PC-3 (cell line): ENCODE measurements at regions of chr9 and their contacts with region 1.

Region 1: DNA sequence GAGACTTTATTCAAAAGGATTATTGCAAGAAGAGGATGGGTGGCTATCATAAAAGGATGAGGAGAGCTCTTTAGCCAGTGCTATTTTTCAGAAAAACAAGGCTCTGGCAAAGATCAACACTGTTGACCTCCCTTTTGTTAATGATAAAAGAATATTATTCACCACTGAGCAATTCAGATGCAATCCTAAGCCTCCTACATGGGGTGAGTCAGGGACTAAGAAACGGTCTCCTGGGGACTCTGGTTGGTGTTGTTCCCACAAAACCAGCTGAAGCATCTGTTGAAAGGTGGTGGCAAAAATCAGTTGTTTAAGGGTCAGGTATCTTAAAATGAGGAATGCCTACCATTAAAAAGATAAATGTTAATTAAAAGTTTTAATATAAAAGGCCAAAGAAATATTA is 7.7 kb upstream of the GCNT1 start:
- DNase-seq: peak; percentile 13
- ATAC-seq: no peak
- H3K4me3 ChIP-seq: no peak overlapping the region
- H3K27ac ChIP-seq: no peak overlapping the region
- H3K4me1 ChIP-seq: no peaks in the 10 kb centered on the region
- H3K27me3 ChIP-seq: no peaks in the 10 kb centered on the region
- CTCF ChIP-seq: no peak

Region 2: GRCh38 chr9:76490249-76490990 is 39.2 kb after region 1 on chr9:
- CTCF ChIA-PET with region 1: no interaction called
- POLR2A ChIA-PET with region 1: no interaction called
- intact Hi-C with region 1: no loop called
- DNase-seq: no peak
- ATAC-seq: no peak
- H3K4me3 ChIP-seq: no peak overlapping the region
- H3K27ac ChIP-seq: no peak overlapping the region
- H3K4me1 ChIP-seq: no peaks in the 10 kb centered on the region
- H3K27me3 ChIP-seq: no peaks in the 10 kb centered on the region
- CTCF ChIP-seq: no peak

Region 3: DNA sequence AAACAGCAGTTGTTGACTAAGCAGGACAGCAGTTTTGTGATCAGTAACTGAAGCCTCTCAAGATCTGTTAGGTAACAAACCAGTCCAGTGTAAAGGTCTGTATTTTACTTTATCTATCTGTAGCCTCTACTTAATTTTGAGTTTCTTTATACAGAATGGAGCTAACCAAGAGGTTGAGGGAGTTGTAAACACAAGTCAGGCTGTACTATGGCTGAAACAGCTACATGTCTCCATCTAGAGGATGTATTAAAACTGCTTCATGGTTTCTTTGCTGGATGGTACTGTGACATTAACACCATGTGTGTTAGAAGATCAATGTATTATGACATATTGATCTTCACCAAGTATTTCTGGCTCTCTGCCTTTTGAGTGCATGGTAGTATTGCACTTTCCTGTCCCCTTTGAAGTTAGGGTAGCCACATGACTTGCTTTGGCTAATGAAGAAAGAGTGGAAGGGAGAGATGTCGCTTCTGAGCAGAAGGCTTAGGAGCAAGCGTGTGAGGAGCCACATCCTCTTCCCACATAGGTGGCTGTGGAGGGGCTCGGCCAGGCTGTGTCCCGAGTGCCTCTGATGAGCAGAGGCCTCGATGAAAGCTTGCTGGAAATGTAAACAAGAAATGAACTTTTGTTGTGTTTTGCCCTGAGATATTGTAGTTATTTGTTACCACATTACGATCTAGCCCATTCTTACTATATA is 207.4 kb after region 1 on chr9:
- CTCF ChIA-PET with region 1: interaction called, 7 read pairs
- POLR2A ChIA-PET with region 1: no interaction called
- intact Hi-C with region 1: loop called (anchors 1 kb)
- DNase-seq: peak; percentile 39
- ATAC-seq: peak; percentile 58
- H3K4me3 ChIP-seq: no peak overlapping the region
- H3K27ac ChIP-seq: no peak overlapping the region
- H3K4me1 ChIP-seq: no peaks in the 10 kb centered on the region
- H3K27me3 ChIP-seq: no peaks in the 10 kb centered on the region
- CTCF ChIP-seq: peak; percentile 62

Region 4: DNA sequence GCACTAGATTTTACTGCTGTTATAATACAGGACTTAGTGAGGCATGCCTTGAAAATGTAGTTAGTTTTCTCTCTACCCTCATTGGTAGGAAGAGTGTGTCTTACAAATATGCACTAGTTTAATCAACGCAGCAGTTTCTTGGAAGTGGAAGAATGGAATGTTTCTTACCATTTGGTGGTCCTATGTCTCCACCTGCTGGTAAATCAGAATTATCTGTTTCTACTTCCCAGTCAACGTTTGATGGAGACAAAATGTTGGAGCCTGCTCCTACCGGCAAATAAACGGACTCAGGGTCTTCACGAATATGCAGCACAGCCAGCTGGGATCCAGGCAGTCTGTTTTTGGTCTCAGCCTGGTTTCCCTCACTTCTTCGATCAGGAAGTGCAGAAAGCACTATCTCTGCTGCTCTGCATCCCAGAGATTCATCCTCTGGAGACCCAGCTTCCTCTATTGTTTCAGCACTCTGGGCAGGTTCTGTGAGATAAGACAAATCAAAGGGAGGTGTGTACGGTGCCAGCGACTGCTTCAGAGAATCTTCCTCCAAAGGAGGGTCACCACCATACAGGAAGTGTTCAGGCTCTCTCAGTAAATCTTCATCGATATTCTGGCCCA is 253.5 kb after region 1 on chr9:
- CTCF ChIA-PET with region 1: no interaction called
- POLR2A ChIA-PET with region 1: no interaction called
- intact Hi-C with region 1: loop called (anchors 1 kb)
- DNase-seq: peak; percentile 62
- ATAC-seq: no peak; the same call in 1 of the 2 replicates
- H3K4me3 ChIP-seq: no peak overlapping the region
- H3K27ac ChIP-seq: no peak overlapping the region
- H3K4me1 ChIP-seq: no peaks in the 10 kb centered on the region
- H3K27me3 ChIP-seq: peaks cover 46% of the 10 kb centered on the region
- CTCF ChIP-seq: peak; percentile 66